T-cell (primary cell): ENCODE measurements at regions of chr2 and their contacts with region 1.

Region 1: DNA sequence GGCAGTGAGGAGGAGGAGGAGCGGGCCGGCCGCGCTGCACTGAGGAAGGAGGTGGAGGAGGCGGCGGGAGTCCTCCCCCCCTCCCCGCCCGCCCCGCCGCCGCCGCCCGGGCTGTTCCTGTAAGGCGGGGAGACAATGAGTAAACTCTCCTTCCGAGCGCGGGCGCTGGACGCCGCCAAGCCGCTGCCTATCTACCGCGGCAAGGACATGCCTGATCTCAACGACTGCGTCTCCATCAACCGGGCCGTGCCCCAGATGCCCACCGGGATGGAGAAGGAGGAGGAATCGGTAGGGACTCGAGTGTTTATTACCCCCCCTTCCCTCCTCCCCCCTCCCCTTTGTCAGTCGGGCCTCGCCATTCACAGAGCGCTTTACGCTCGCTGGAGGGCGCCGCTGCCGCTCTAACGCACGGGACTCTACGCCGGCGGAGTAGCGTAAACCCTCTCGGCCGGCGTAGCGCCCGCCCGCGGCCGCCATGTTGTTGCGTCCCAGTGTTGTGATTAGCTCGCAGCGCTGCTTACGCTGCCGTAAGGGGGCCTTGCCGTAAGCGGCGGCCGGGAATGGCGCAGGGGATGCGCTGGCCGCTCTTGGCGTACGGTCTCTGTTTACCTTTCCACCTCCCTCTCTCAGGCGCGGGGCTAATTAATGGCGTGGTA is 460 bp downstream of the EPC2 start:
- DNase-seq: peak; percentile 88 to 98 (median 93)
- ATAC-seq: peak; percentile 69 to 83 (median 76)
- H3K4me3 ChIP-seq: peak overlapping the region; percentile 88 to 89
- H3K4me3 Mint-ChIP-seq: peak overlapping the region; percentile 85 to 96 (median 93)
- H3K27ac ChIP-seq: peak overlapping the region; percentile 96
- H3K27ac Mint-ChIP-seq: peak overlapping the region; percentile 92 to 97
- H3K4me1 ChIP-seq: peaks cover 10 to 22% of the 10 kb centered on the region in 2 experiments
- H3K4me1 Mint-ChIP-seq: peaks cover 44 to 48% (median 44%) of the 10 kb centered on the region in 3 donors
- H3K27me3 ChIP-seq: no peaks in the 10 kb centered on the region
- H3K27me3 Mint-ChIP-seq: no peaks in the 10 kb centered on the region

Region 2: GRCh38 chr2:147416099-147416498 is 1228.9 kb before region 1 on chr2:
- CTCF ChIA-PET with region 1: no interaction called
- POLR2A ChIA-PET with region 1: no interaction called
- DNase-seq: no peak
- ATAC-seq: no peak
- H3K4me3 ChIP-seq: no peak overlapping the region
- H3K4me3 Mint-ChIP-seq: no peak overlapping the region
- H3K27ac ChIP-seq: no peak overlapping the region
- H3K27ac Mint-ChIP-seq: no peak overlapping the region
- H3K4me1 ChIP-seq: no peaks in the 10 kb centered on the region
- H3K4me1 Mint-ChIP-seq: peaks cover 0 to 3% (median 0%) of the 10 kb centered on the region in 3 donors
- H3K27me3 ChIP-seq: no peaks in the 10 kb centered on the region
- H3K27me3 Mint-ChIP-seq: peaks cover 3 to 12% of the 10 kb centered on the region in 2 donors

Region 3: GRCh38 chr2:148524519-148524919 is 120.5 kb before region 1 on chr2:
- CTCF ChIA-PET with region 1: interaction called, 3 to 21 read pairs
- POLR2A ChIA-PET with region 1: interaction called, 3 to 40 read pairs
- DNase-seq: peak in 34 of 35 experiments; percentile 38 to 87 (median 66)
- ATAC-seq: peak; percentile 88 to 93 (median 92)
- H3K4me3 ChIP-seq: no peak overlapping the region
- H3K4me3 Mint-ChIP-seq: peak overlapping the region; percentile 6 to 87 (median 37)
- H3K27ac ChIP-seq: peak overlapping the region; percentile 77
- H3K27ac Mint-ChIP-seq: peak overlapping the region; percentile 95 to 99
- H3K4me1 ChIP-seq: peaks cover 69 to 75% of the 10 kb centered on the region in 2 experiments
- H3K4me1 Mint-ChIP-seq: peaks cover 88 to 92% (median 90%) of the 10 kb centered on the region in 3 donors
- H3K27me3 ChIP-seq: no peaks in the 10 kb centered on the region
- H3K27me3 Mint-ChIP-seq: no peaks in the 10 kb centered on the region

Region 4: GRCh38 chr2:148552675-148553331 is 92.2 kb before region 1 on chr2:
- CTCF ChIA-PET with region 1: interaction called, 3 to 10 read pairs
- POLR2A ChIA-PET with region 1: interaction called, 3 to 4 read pairs
- DNase-seq: peak in 14 of 35 experiments; percentile 12 to 68 (median 24)
- ATAC-seq: peak; percentile 76 to 87 (median 79)
- H3K4me3 ChIP-seq: peak overlapping the region; percentile 57 to 62
- H3K4me3 Mint-ChIP-seq: no peak overlapping the region
- H3K27ac ChIP-seq: peak overlapping the region; percentile 84
- H3K27ac Mint-ChIP-seq: no peak overlapping the region
- H3K4me1 ChIP-seq: peaks cover 3 to 15% of the 10 kb centered on the region in 2 experiments
- H3K4me1 Mint-ChIP-seq: peaks cover 0 to 4% (median 0%) of the 10 kb centered on the region in 3 donors
- H3K27me3 ChIP-seq: no peaks in the 10 kb centered on the region
- H3K27me3 Mint-ChIP-seq: no peaks in the 10 kb centered on the region

Region 5: GRCh38 chr2:148658807-148659722 is 14.1 kb after region 1 on chr2:
- CTCF ChIA-PET with region 1: interaction called, 3 to 24 read pairs
- POLR2A ChIA-PET with region 1: interaction called, 6 to 42 read pairs
- DNase-seq: peak in 1 of 35 experiments; percentile 65
- ATAC-seq: peak; percentile 65 to 87 (median 80)
- H3K4me3 ChIP-seq: no peak overlapping the region
- H3K4me3 Mint-ChIP-seq: peak overlapping the region; percentile 34 to 55 (median 46)
- H3K27ac ChIP-seq: peak overlapping the region; percentile 44
- H3K27ac Mint-ChIP-seq: peak overlapping the region; percentile 76 to 92
- H3K4me1 ChIP-seq: peaks cover 18 to 33% of the 10 kb centered on the region in 2 experiments
- H3K4me1 Mint-ChIP-seq: peaks cover 80 to 81% (median 80%) of the 10 kb centered on the region in 3 donors
- H3K27me3 ChIP-seq: no peaks in the 10 kb centered on the region
- H3K27me3 Mint-ChIP-seq: no peaks in the 10 kb centered on the region

Region 6: GRCh38 chr2:148971547-148971946 is 326.5 kb after region 1 on chr2:
- CTCF ChIA-PET with region 1: interaction called in 1 of 2 experiments, 11 read pairs
- POLR2A ChIA-PET with region 1: no interaction called
- DNase-seq: peak in 1 of 35 experiments; percentile 10
- ATAC-seq: no peak
- H3K4me3 ChIP-seq: no peak overlapping the region
- H3K4me3 Mint-ChIP-seq: no peak overlapping the region
- H3K27ac ChIP-seq: no peak overlapping the region
- H3K27ac Mint-ChIP-seq: no peak overlapping the region
- H3K4me1 ChIP-seq: no peaks in the 10 kb centered on the region
- H3K4me1 Mint-ChIP-seq: peaks cover 8 to 13% (median 11%) of the 10 kb centered on the region in 3 donors
- H3K27me3 ChIP-seq: no peaks in the 10 kb centered on the region
- H3K27me3 Mint-ChIP-seq: no peaks in the 10 kb centered on the region